AG04450 (cell line): ENCODE measurements at regions of chr5 and their contacts with region 1.

Region 1: GRCh38 chr5:171913987-171914273 is 92.5 kb downstream of the FBXW11 start:
- DNase-seq: no peak
- H3K4me3 ChIP-seq: no peak overlapping the region
- H3K27ac ChIP-seq: no peak overlapping the region
- H3K27me3 ChIP-seq: no peaks in the 10 kb centered on the region
- CTCF ChIP-seq: no peak

Region 2: GRCh38 chr5:171418316-171418981 is 495.5 kb before region 1 on chr5:
- CTCF ChIA-PET with region 1: interaction called, 141 read pairs
- POLR2A ChIA-PET with region 1: no interaction called
- DNase-seq: peak; percentile 72
- H3K4me3 ChIP-seq: peak overlapping the region; percentile 54
- H3K27ac ChIP-seq: no peak overlapping the region
- H3K27me3 ChIP-seq: peaks cover 8% of the 10 kb centered on the region
- CTCF ChIP-seq: peak; percentile 90

Region 3: GRCh38 chr5:171580502-171581265 is 333.2 kb before region 1 on chr5:
- CTCF ChIA-PET with region 1: no interaction called
- POLR2A ChIA-PET with region 1: no interaction called
- DNase-seq: no peak
- H3K4me3 ChIP-seq: no peak overlapping the region
- H3K27ac ChIP-seq: peak overlapping the region; percentile 21
- H3K27me3 ChIP-seq: peaks cover 5% of the 10 kb centered on the region
- CTCF ChIP-seq: no peak

Region 4: DNA sequence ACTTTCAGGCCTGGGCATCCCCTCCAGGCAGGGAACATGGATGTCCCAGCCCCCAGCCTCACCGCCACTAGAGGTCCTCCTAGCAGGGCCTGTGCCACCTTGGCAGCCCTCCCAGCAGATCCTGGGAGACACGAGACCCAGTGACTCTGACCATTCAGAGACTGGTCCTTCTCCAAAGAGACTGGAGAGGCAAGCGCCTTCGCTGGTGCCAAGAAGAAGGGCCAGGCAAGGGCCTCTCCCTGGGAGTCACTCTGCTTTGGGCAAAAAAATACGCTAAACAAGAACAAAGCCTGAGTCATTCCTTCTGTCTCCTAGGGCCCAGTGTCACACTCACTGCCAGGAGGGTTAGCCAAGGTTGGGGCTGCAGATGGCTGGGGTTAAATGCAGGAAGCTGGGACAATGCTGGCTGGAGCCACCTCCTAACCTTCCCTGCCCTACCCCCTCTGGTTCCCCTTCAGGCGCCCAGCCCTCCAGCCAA is 163.6 kb before region 1 on chr5:
- CTCF ChIA-PET with region 1: no interaction called
- POLR2A ChIA-PET with region 1: no interaction called
- DNase-seq: no peak
- H3K4me3 ChIP-seq: no peak overlapping the region
- H3K27ac ChIP-seq: no peak overlapping the region
- H3K27me3 ChIP-seq: no peaks in the 10 kb centered on the region
- CTCF ChIP-seq: no peak

Region 5: GRCh38 chr5:171901764-171902163 is 12.2 kb before region 1 on chr5:
- CTCF ChIA-PET with region 1: interaction called, 17 read pairs
- POLR2A ChIA-PET with region 1: no interaction called
- DNase-seq: no peak
- H3K4me3 ChIP-seq: no peak overlapping the region
- H3K27ac ChIP-seq: no peak overlapping the region
- H3K27me3 ChIP-seq: no peaks in the 10 kb centered on the region
- CTCF ChIP-seq: no peak

Region 6: DNA sequence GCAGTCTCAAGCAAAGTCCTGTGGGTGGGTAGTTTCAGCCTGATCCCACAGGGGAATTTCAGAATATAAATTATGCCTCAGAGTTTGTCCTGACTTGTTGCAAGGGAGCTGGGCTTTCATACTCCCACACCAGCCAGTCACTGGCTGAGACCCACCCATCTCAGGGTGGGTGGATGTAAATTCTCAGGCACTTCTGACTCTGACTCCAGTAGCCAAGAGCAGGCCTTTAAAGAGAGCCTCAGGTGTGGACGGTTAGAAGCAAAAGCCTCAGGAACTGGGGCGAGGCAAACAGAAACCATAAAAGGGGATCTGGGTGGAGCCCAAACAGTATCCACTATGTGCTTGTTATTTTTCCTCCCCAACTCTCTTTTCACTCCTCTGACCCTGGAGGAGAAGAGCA is 121.1 kb after region 1 on chr5:
- CTCF ChIA-PET with region 1: interaction called, 34 read pairs
- POLR2A ChIA-PET with region 1: no interaction called
- DNase-seq: no peak
- H3K4me3 ChIP-seq: no peak overlapping the region
- H3K27ac ChIP-seq: no peak overlapping the region
- H3K27me3 ChIP-seq: peaks cover 8% of the 10 kb centered on the region
- CTCF ChIP-seq: no peak

Region 7: DNA sequence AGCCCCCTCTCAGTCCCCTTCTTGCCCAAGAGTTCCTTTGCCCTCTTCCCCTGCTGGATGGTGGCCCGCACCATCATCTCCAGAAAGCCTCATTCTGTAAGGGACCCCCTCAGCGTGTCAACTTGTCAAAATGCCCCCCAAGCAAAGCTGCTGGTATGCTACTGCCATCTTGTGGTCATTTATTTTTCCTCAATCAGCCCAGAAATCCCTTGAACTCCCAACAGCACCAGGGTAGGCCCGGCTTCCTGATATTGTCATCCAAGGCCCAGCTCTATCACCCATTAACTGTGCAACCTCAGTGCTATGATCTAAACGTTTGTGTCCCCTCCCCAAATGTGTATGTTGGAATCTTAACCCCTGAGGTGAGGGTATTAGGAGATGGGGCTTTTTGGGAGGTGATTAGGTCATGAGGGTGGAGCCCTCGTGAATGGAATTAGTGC is 145.8 kb after region 1 on chr5:
- CTCF ChIA-PET with region 1: interaction called, 88 read pairs
- POLR2A ChIA-PET with region 1: no interaction called
- DNase-seq: no peak
- H3K4me3 ChIP-seq: no peak overlapping the region
- H3K27ac ChIP-seq: no peak overlapping the region
- H3K27me3 ChIP-seq: no peaks in the 10 kb centered on the region
- CTCF ChIP-seq: peak; percentile 61

Region 8: GRCh38 chr5:172293054-172293744 is 379.3 kb after region 1 on chr5:
- CTCF ChIA-PET with region 1: interaction called, 12 read pairs
- POLR2A ChIA-PET with region 1: no interaction called
- DNase-seq: no peak
- H3K4me3 ChIP-seq: no peak overlapping the region
- H3K27ac ChIP-seq: no peak overlapping the region
- H3K27me3 ChIP-seq: peaks cover 4% of the 10 kb centered on the region
- CTCF ChIP-seq: peak; percentile 89